GM12878 (cell line): ENCODE measurements at regions of chr22 and their contacts with region 1.

Region 1: GRCh38 chr22:40065981-40066380 is 71.2 kb downstream of the FAM83F start:
- DNase-seq: no peak
- ATAC-seq: no peak
- H3K4me3 ChIP-seq: no peak overlapping the region
- H3K27ac ChIP-seq: no peak overlapping the region
- H3K4me1 ChIP-seq: peaks cover 8% of the 10 kb centered on the region; the same call in 1 of the 2 replicates
- H3K27me3 ChIP-seq: no peaks in the 10 kb centered on the region
- CTCF ChIP-seq: no peak
- EP300 ChIP-seq: no peak
- POLR2A ChIP-seq: no peak
- RAD21 ChIP-seq: no peak

Region 2: GRCh38 chr22:39622881-39623367 is 443.1 kb before region 1 on chr22:
- CTCF ChIA-PET with region 1: no interaction called
- POLR2A ChIA-PET with region 1: no interaction called
- RAD21 ChIA-PET with region 1: no interaction called
- SMC1A ChIA-PET with region 1: no interaction called
- in situ Hi-C with region 1: no loop called
- intact Hi-C with region 1: no loop called
- DNase-seq: no peak
- ATAC-seq: peak; percentile 86
- H3K4me3 ChIP-seq: no peak overlapping the region
- H3K27ac ChIP-seq: no peak overlapping the region
- H3K4me1 ChIP-seq: no peaks in the 10 kb centered on the region; the same call in 1 of the 2 replicates
- H3K27me3 ChIP-seq: peaks cover 0 to 1% of the 10 kb centered on the region in 2 experiments; a peak in 2 of 4 replicates
- CTCF ChIP-seq: peak; percentile 66 to 75 (median 75)
- EP300 ChIP-seq: no peak
- POLR2A ChIP-seq: no peak
- RAD21 ChIP-seq: peak; percentile 84

Region 3: GRCh38 chr22:40055143-40055883 is 10.7 kb before region 1 on chr22:
- CTCF ChIA-PET with region 1: interaction called, 5 read pairs
- POLR2A ChIA-PET with region 1: interaction called, 4 read pairs
- RAD21 ChIA-PET with region 1: no interaction called
- SMC1A ChIA-PET with region 1: interaction called, 10 read pairs
- in situ Hi-C with region 1: no loop called
- intact Hi-C with region 1: no loop called
- DNase-seq: peak; percentile 40
- ATAC-seq: peak; percentile 92
- H3K4me3 ChIP-seq: 0 out of 2 replicates have a peak overlapping the region, but pooled peaks have one; percentile 10
- H3K27ac ChIP-seq: no peak overlapping the region; the same call in 1 of the 2 replicates
- H3K4me1 ChIP-seq: peaks cover 30% of the 10 kb centered on the region
- H3K27me3 ChIP-seq: no peaks in the 10 kb centered on the region
- CTCF ChIP-seq: no peak
- EP300 ChIP-seq: no peak
- POLR2A ChIP-seq: no peak
- RAD21 ChIP-seq: no peak